ENCODE measurements at regions of chr5 and their contacts with region 1.

Region 1: GRCh38 chr5:138077065-138077696 is 6.7 kb upstream of the WNT8A start:
- DNase-seq: peak; percentile 67
- H3K4me3 Mint-ChIP-seq: no peak overlapping the region
- H3K27ac Mint-ChIP-seq: no peak overlapping the region
- H3K4me1 Mint-ChIP-seq: peaks cover 13% of the 10 kb centered on the region
- H3K27me3 Mint-ChIP-seq: no peaks in the 10 kb centered on the region

Region 2: DNA sequence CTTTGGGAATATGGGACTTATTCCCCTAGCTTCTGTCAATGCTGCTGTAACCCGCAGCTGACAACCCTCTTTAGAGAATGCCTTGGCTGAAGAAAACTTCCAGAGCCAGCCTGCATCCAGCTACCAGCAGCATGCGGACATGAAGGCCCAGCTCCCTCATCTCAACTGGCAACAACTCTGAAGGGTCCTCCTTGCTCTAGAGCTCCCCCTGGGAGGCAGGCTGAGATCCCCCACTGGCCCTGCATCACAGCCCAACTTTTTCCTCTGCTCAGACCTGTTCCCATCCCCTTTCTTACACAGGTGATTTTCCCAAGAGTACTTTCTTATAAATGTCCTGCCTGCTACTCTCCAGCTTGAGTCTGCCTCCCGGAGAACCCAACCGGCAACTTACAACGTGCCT is 12.1 kb before region 1 on chr5:
- CTCF ChIA-PET with region 1: interaction called, 42 read pairs
- POLR2A ChIA-PET with region 1: no interaction called
- intact Hi-C with region 1: no loop called
- DNase-seq: peak; percentile 15
- H3K4me3 Mint-ChIP-seq: no peak overlapping the region
- H3K27ac Mint-ChIP-seq: no peak overlapping the region
- H3K4me1 Mint-ChIP-seq: peaks cover 4% of the 10 kb centered on the region
- H3K27me3 Mint-ChIP-seq: no peaks in the 10 kb centered on the region

Region 3: GRCh38 chr5:138091685-138092084 is 14.5 kb after region 1 on chr5:
- CTCF ChIA-PET with region 1: interaction called, 10 read pairs
- POLR2A ChIA-PET with region 1: no interaction called
- intact Hi-C with region 1: no loop called
- DNase-seq: no peak
- H3K4me3 Mint-ChIP-seq: no peak overlapping the region
- H3K27ac Mint-ChIP-seq: no peak overlapping the region
- H3K4me1 Mint-ChIP-seq: peaks cover 6% of the 10 kb centered on the region
- H3K27me3 Mint-ChIP-seq: no peaks in the 10 kb centered on the region

Region 4: GRCh38 chr5:138128334-138128733 is 51.2 kb after region 1 on chr5:
- CTCF ChIA-PET with region 1: interaction called, 90 read pairs
- POLR2A ChIA-PET with region 1: no interaction called
- intact Hi-C with region 1: loop called (anchors 1 kb)
- DNase-seq: no peak
- H3K4me3 Mint-ChIP-seq: no peak overlapping the region
- H3K27ac Mint-ChIP-seq: no peak overlapping the region
- H3K4me1 Mint-ChIP-seq: peaks cover 2% of the 10 kb centered on the region
- H3K27me3 Mint-ChIP-seq: peaks cover 3% of the 10 kb centered on the region

Region 5: GRCh38 chr5:138138949-138139780 is 62.0 kb after region 1 on chr5 and contains the start of gene NME5:
- CTCF ChIA-PET with region 1: interaction called, 90 read pairs
- POLR2A ChIA-PET with region 1: no interaction called
- intact Hi-C with region 1: no loop called
- DNase-seq: peak; percentile 11
- H3K4me3 Mint-ChIP-seq: no peak within 1 kb of the TSS
- H3K27ac Mint-ChIP-seq: no peak within 1 kb of the TSS
- H3K4me1 Mint-ChIP-seq: no peaks in the 10 kb centered on the region
- H3K27me3 Mint-ChIP-seq: peaks cover 7% of the 10 kb centered on the region
- total RNA-seq, gene NME5: not detected